Heart left ventricle (tissue), 16 donors: ENCODE measurements at regions of chr2 and their contacts with region 1.

Region 1: GRCh38 chr2:68467077-68467960 is at the starts of genes APLF and FBXO48:
- DNase-seq: peak; percentile 97 to 98 (median 98)
- ATAC-seq: peak; percentile 99
- H3K4me3 ChIP-seq: peak within 1 kb of the TSS; percentile 52 to 92 (median 76)
- H3K27ac ChIP-seq: peak within 1 kb of the TSS in 11 of 12 donors; percentile 77 to 90 (median 85)
- H3K4me1 ChIP-seq: peaks cover 0 to 25% (median 17%) of the 10 kb centered on the region in 12 donors
- H3K27me3 ChIP-seq: no peaks in the 10 kb centered on the region
- CTCF ChIP-seq: no peak
- POLR2A ChIP-seq: peak in 1 of 2 donors; percentile 57
- total RNA-seq, gene APLF: 3.9 to 7.9 (median 5.4) TPM
- total RNA-seq, gene FBXO48: 0.56 to 1.3 (median 1.1) TPM

Region 2: GRCh38 chr2:68491582-68491981 is 24.3 kb after region 1 on chr2:
- intact Hi-C with region 1: no loop called
- DNase-seq: no peak
- ATAC-seq: no peak
- H3K4me3 ChIP-seq: no peak overlapping the region
- H3K27ac ChIP-seq: no peak overlapping the region
- H3K4me1 ChIP-seq: peaks cover 0 to 3% (median 0%) of the 10 kb centered on the region in 12 donors
- H3K27me3 ChIP-seq: no peaks in the 10 kb centered on the region
- CTCF ChIP-seq: no peak
- POLR2A ChIP-seq: no peak

Region 3: GRCh38 chr2:68594674-68595492 is 127.6 kb after region 1 on chr2:
- intact Hi-C with region 1: loop called in 1 of 10 experiments (anchors 10 kb)
- DNase-seq: peak in 3 of 5 donors; percentile 26 to 47 (median 29)
- ATAC-seq: peak in 2 of 4 donors; percentile 59 to 76
- H3K4me3 ChIP-seq: peak overlapping the region in 7 of 12 donors; percentile 3 to 36 (median 12)
- H3K27ac ChIP-seq: peak overlapping the region in 7 of 12 donors; percentile 17 to 65 (median 48)
- H3K4me1 ChIP-seq: peaks cover 0 to 10% (median 0%) of the 10 kb centered on the region in 12 donors
- H3K27me3 ChIP-seq: no peaks in the 10 kb centered on the region
- CTCF ChIP-seq: peak; percentile 66 to 84 (median 78)
- POLR2A ChIP-seq: no peak

Region 4: DNA sequence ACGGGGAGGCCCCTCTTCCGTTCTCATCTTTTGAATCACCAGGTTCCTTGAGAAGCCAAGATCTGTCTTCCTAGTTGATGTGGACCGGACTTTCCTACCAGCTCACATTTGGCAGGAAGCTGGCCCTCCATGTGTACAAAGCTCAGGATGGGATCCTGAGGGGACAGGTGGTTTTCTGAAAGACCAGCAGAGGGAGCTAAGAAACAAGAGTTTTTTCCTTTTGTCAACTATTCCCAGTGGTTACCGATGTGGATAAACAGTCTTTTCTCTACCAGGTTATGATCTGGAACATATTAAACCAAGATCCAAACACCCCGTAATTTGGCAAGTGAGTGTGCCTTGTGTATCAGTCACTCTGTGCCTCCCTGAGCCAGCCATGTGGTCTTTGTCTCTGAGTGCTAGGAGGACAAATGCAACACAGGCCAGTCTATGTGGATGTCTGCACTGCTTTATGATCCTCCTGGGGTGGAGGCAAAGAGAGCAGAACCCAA is 242.1 kb after region 1 on chr2:
- intact Hi-C with region 1: loop called in 6 of 10 experiments (anchors 5 to 10 kb)
- DNase-seq: peak in 1 of 5 donors; percentile 15
- ATAC-seq: peak in 3 of 4 donors; percentile 69 to 77 (median 74)
- H3K4me3 ChIP-seq: no peak overlapping the region
- H3K27ac ChIP-seq: no peak overlapping the region
- H3K4me1 ChIP-seq: peaks cover 0 to 9% (median 0%) of the 10 kb centered on the region in 12 donors
- H3K27me3 ChIP-seq: peaks cover 0 to 2% (median 0%) of the 10 kb centered on the region in 9 donors
- CTCF ChIP-seq: peak; percentile 62 to 80 (median 70)
- POLR2A ChIP-seq: no peak

Region 5: DNA sequence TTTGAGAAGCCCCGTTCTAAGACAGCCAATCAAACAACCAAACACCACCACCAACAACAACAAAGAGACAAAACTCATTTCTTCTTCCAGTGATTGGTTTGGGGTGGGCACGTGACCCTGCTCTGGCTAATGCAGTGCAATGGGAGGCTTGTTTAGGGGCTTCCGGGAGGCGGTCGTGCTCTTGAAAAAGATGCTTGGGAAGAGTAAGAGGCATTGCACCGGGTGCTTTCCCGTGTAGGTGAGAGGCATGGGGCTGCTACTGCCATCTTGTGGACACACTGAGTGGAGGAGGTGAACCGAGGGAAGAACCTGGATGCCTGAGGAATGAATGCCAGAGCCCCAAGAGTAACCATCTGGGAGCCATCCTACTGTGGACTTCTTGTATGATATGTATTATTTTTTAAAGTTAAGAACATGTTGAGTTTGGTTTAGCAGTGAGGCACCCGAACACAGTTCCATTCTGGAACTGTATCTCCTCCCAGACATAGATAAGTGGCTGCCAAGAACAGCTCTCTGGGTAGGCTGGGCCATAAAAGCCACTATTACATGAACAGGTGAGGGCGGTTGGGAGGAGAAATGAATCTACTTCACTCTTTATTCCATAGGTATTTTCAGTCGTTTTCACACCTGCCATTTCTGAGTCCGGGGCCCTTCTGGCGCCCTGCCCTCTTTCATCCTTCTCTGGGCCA is 248.2 kb after region 1 on chr2:
- intact Hi-C with region 1: loop called in 8 of 10 experiments (anchors 2 to 10 kb)
- DNase-seq: peak in 2 of 5 donors; percentile 49 to 52
- ATAC-seq: peak in 3 of 4 donors; percentile 62 to 71 (median 68)
- H3K4me3 ChIP-seq: no peak overlapping the region
- H3K27ac ChIP-seq: peak overlapping the region in 1 of 12 donors; percentile 88
- H3K4me1 ChIP-seq: peaks cover 0 to 35% (median 0%) of the 10 kb centered on the region in 12 donors
- H3K27me3 ChIP-seq: peaks cover 0 to 6% (median 0%) of the 10 kb centered on the region in 9 donors
- CTCF ChIP-seq: peak; percentile 43 to 72 (median 54)
- POLR2A ChIP-seq: no peak

Region 6: GRCh38 chr2:68828887-68829708 is 361.8 kb after region 1 on chr2:
- intact Hi-C with region 1: loop called in 1 of 10 experiments (anchors 5 kb)
- DNase-seq: peak; percentile 91 to 97 (median 94)
- ATAC-seq: peak; percentile 82 to 86 (median 83)
- H3K4me3 ChIP-seq: peak overlapping the region in 9 of 12 donors; percentile 3 to 30 (median 15)
- H3K27ac ChIP-seq: peak overlapping the region; percentile 53 to 85 (median 74)
- H3K4me1 ChIP-seq: peaks cover 11 to 84% (median 44%) of the 10 kb centered on the region in 12 donors
- H3K27me3 ChIP-seq: no peaks in the 10 kb centered on the region
- CTCF ChIP-seq: peak in 1 of 12 donors; percentile 10
- POLR2A ChIP-seq: no peak

Region 7: DNA sequence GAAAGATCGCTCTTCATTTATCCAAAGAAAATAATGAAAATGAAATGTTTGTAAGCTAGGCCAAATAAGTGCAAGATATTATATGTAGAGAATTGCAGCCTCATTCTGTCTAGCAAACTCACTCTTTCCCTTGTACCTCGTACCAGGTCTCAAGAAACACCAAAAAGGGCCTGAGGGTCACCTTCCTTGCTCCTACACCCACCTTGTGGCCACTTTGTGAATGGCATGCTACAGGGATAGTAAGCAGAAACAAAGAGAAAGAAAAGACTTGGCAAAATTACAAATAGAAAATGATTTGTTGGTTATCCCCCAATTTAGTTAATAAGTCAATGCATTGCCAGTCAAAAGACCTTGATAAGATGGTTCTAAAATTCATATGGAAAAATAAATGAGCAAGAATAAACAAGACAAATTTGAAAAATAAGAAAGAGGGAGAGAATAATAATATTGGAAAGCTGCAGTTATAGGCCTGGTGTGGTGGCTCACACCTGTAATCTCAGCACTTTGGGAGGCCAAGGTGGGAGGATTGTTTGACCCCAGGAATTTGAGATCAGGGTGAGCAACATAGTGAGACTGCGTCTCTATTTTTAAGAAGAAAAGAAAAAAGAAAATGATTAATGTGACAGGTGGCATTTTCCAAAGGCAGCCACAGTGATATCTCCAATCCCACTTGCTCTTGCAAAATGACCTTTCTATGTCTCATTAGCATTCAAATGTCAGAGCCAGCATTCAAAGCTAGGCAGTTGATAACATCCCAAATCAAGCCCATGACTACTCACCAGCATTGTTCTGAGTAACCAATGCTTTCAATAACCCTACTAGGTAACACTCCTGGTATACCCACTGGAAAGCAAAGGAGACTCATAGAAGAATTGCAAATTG is 442.7 kb after region 1 on chr2:
- intact Hi-C with region 1: loop called in 1 of 10 experiments (anchors 5 kb)
- DNase-seq: peak in 4 of 5 donors; percentile 46 to 68 (median 63)
- ATAC-seq: peak in 3 of 4 donors; percentile 66 to 76 (median 74)
- H3K4me3 ChIP-seq: no peak overlapping the region
- H3K27ac ChIP-seq: no peak overlapping the region
- H3K4me1 ChIP-seq: peaks cover 0 to 54% (median 8%) of the 10 kb centered on the region in 12 donors
- H3K27me3 ChIP-seq: no peaks in the 10 kb centered on the region
- CTCF ChIP-seq: peak; percentile 86 to 95 (median 93)
- POLR2A ChIP-seq: no peak

Region 8: DNA sequence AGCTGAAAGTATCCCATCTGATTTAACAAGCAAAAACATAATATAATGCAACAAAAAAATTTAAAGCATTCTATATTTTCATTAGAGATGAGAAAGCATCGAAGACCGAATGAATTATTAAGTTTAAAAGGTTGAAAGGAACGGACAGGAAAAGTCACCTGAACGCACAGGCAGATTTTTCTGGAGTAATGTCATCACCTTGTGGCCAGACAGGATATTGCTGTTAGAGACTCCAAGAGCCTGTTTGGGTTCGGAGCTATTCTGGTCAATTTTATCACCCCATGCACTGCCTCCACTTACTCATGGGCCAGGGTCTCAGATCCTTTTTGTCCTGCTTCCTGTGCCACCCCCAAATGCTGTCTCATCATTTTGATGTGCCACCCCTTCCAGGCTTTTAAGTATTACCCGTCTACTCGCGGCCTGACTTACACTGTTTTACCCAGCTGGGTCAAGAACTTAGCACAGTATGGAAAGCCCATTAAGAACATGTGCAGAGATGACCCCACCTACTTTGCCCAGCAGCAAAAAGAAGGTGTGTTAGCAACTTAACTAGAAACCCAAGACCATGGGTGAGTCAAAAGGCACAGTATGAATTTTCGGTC is 458.1 kb after region 1 on chr2:
- intact Hi-C with region 1: loop called in 4 of 10 experiments (anchors 5 to 10 kb)
- DNase-seq: no peak
- ATAC-seq: peak in 3 of 4 donors; percentile 57 to 65 (median 62)
- H3K4me3 ChIP-seq: no peak overlapping the region
- H3K27ac ChIP-seq: no peak overlapping the region
- H3K4me1 ChIP-seq: no peaks in the 10 kb centered on the region
- H3K27me3 ChIP-seq: peaks cover 0 to 13% (median 0%) of the 10 kb centered on the region in 9 donors
- CTCF ChIP-seq: peak; percentile 74 to 92 (median 82)
- POLR2A ChIP-seq: no peak

Region 9: GRCh38 chr2:69549421-69549820 is 1082.1 kb after region 1 on chr2:
- intact Hi-C with region 1: no loop called
- DNase-seq: no peak
- ATAC-seq: no peak
- H3K4me3 ChIP-seq: no peak overlapping the region
- H3K27ac ChIP-seq: no peak overlapping the region
- H3K4me1 ChIP-seq: peaks cover 0 to 49% (median 13%) of the 10 kb centered on the region in 12 donors
- H3K27me3 ChIP-seq: no peaks in the 10 kb centered on the region
- CTCF ChIP-seq: no peak
- POLR2A ChIP-seq: no peak